ENCODE measurements at regions of chr1 and their contacts with region 1.

Region 1: DNA sequence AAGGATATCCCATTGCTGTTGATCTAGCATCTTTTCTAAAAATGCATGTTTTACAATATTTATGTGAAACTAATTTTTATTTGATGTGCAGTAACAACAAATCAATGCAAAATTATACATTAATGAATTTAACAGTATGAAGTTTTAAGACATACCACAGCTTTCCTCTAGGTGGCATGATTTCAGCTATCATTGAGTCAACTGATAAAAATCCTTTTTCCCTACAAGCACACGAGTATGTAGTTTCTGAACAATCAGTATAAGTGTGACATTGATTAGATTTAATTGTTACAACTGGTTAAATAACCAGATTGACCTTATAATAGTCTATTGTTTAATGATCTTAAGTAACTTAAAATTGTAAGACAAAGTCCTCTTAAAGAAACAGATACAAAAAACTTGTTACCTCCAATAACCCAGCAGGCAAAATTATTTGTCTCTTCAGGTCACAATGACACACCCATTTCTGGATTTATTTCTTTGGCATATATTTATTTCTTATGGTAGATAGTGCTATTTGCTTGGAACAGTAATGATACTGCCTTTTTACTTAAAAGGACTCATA is 5.8 kb upstream of the TGFB2 start:
- DNase-seq: no peak
- H3K4me3 Mint-ChIP-seq: no peak overlapping the region
- H3K27ac Mint-ChIP-seq: no peak overlapping the region
- H3K4me1 Mint-ChIP-seq: peaks cover 20% of the 10 kb centered on the region
- H3K27me3 Mint-ChIP-seq: no peaks in the 10 kb centered on the region
- CTCF ChIP-seq: peak; percentile 63

Region 2: GRCh38 chr1:218412171-218412570 is 72.8 kb after region 1 on chr1:
- CTCF ChIA-PET with region 1: no interaction called
- intact Hi-C with region 1: no loop called
- DNase-seq: no peak
- H3K4me3 Mint-ChIP-seq: no peak overlapping the region
- H3K27ac Mint-ChIP-seq: no peak overlapping the region
- H3K4me1 Mint-ChIP-seq: peaks cover 9% of the 10 kb centered on the region
- H3K27me3 Mint-ChIP-seq: no peaks in the 10 kb centered on the region
- CTCF ChIP-seq: no peak

Region 3: DNA sequence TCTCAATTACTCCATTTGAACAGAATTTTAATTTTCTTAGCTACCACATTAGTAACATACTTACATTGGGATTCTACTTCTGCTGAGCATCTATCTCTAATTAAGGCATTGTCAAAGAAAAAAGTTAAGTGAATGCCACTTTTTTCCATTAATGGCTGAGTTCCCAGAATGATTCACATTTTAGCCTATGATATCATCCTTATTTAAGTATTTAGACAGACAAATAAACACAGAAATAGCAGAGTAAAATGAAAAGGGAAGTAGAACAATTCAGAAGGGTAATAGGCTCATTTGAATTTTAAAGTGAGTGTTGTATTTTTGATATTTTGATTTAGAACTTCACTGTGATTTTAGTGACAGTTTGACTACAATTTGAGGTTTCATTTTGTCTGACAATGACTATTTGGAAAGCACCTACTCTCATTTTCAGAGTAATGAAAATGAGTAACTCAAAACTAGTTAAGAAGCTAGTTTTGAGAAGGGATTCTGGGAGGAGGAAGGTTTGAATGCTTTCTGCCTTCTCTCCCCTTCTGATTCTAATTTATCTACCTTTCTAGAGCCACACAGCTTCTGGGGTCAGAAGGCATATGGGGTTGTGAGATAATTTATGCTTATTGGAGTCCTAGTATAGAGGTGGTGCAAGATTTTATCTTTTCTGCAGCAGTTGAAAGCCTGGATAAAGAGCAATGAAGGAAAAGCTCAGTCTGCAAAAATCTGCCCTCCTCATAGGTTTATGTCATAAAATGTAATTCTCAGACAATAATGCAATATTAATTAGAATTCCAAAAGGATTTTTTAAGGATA is 849.9 kb after region 1 on chr1:
- CTCF ChIA-PET with region 1: no interaction called
- intact Hi-C with region 1: loop called (anchors 5 kb)
- DNase-seq: no peak
- H3K4me3 Mint-ChIP-seq: peak overlapping the region; percentile 56
- H3K27ac Mint-ChIP-seq: peak overlapping the region; percentile 57
- H3K4me1 Mint-ChIP-seq: peaks cover 51% of the 10 kb centered on the region
- H3K27me3 Mint-ChIP-seq: no peaks in the 10 kb centered on the region
- CTCF ChIP-seq: no peak

Region 4: GRCh38 chr1:219660666-219661463 is 1321.5 kb after region 1 on chr1:
- CTCF ChIA-PET with region 1: interaction called, 3 read pairs
- intact Hi-C with region 1: loop called (anchors 2 kb)
- DNase-seq: peak; percentile 88
- H3K4me3 Mint-ChIP-seq: peak overlapping the region; percentile 10
- H3K27ac Mint-ChIP-seq: no peak overlapping the region
- H3K4me1 Mint-ChIP-seq: peaks cover 9% of the 10 kb centered on the region
- H3K27me3 Mint-ChIP-seq: peaks cover 7% of the 10 kb centered on the region
- CTCF ChIP-seq: peak; percentile 75

Measured in Calu3 (cell line).